Heart left ventricle (tissue), 16 donors: ENCODE measurements at regions of chr12 and their contacts with region 1.

Region 1: DNA sequence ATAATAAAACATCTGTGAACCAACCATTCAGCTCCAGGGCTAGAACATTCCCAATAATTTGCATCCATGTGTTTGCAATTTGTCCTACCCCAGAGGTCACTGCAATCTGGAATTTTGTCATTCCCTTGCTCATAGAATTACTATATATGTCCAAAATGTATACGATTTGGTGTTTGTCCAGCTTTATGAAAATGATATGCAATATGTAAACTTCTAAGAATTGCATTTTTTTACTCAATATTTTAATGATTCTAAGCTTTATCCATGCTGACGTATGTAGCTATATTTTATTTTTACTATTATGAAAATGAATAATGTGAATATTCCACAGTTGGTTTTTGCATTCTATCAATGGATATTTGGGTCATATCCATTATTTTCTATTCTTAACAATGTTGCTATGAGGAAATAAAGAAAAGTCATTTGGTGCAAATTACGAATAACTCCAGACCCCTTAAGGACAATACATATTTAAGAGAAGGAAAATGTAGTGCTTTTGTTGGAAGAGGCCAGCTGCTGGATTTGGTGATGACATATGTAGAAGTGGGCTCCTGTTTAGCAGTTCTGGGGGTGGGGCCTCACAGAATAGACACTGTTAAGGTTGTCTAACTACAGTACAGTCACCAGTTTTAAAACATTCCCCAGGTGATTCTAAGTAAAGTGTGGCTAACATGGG is 139.4 kb downstream of the SLC38A4 start:
- DNase-seq: no peak
- ATAC-seq: no peak
- H3K4me3 ChIP-seq: no peak overlapping the region
- H3K27ac ChIP-seq: no peak overlapping the region
- H3K4me1 ChIP-seq: no peaks in the 10 kb centered on the region
- H3K27me3 ChIP-seq: no peaks in the 10 kb centered on the region
- CTCF ChIP-seq: no peak
- POLR2A ChIP-seq: no peak

Region 2: DNA sequence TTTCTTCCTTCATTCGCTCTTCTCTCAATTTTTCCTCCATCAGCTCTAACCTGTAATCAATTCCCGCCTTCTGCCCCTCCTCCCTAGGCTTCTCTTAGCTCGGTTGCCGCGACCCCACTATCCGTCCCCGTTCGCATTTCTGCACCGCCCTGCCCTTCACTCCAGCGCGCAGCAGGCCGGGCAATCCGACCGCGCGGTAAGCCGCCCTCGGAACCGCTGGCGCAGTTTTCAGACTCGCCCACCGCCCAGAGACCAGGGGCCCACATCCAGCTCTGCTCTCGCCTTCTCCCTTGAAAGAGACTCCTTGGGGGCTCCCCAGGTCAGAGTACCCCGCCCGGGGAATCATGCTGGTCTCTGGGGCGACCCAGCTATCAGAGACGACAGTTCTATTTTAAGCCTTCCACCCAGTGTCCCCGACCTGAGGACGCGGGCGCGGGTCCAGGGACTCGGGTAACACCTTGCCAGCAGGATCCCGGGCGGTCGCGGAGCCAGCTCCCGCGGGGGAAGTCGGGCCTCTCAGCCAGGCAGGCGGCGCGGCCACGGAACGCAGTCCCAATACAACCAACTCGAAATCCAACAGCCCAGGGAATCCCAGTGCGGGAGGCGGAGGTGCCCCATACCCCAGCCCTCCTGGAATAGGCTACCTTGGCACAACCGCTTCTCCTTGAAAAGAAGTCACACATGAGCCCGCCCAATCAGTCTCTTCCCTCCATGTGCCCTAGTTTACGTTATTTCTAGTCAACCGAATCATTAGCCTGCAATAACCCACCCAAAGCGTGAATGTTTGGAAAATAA is 145.1 kb after region 1 on chr12:
- intact Hi-C with region 1: loop called in 1 of 10 experiments (anchors 10 kb)
- DNase-seq: peak; percentile 25 to 85 (median 82)
- ATAC-seq: peak; percentile 92 to 97 (median 93)
- H3K4me3 ChIP-seq: peak overlapping the region; percentile 37 to 58 (median 50)
- H3K27ac ChIP-seq: peak overlapping the region in 4 of 12 donors; percentile 50 to 79 (median 64)
- H3K4me1 ChIP-seq: peaks cover 0 to 15% (median 0%) of the 10 kb centered on the region in 12 donors
- H3K27me3 ChIP-seq: peaks cover 0 to 65% (median 9%) of the 10 kb centered on the region in 9 donors
- CTCF ChIP-seq: no peak
- POLR2A ChIP-seq: no peak

Region 3: GRCh38 chr12:46983393-46984266 is 297.2 kb after region 1 on chr12:
- intact Hi-C with region 1: loop called in 1 of 10 experiments (anchors 5 kb)
- DNase-seq: no peak
- ATAC-seq: peak in 3 of 4 donors; percentile 68 to 75 (median 70)
- H3K4me3 ChIP-seq: no peak overlapping the region
- H3K27ac ChIP-seq: no peak overlapping the region
- H3K4me1 ChIP-seq: peaks cover 0 to 3% (median 0%) of the 10 kb centered on the region in 12 donors
- H3K27me3 ChIP-seq: no peaks in the 10 kb centered on the region
- CTCF ChIP-seq: peak; percentile 49 to 78 (median 66)
- POLR2A ChIP-seq: no peak

Region 4: GRCh38 chr12:47014474-47014873 is 328.1 kb after region 1 on chr12:
- intact Hi-C with region 1: loop called in 1 of 10 experiments (anchors 10 kb)
- DNase-seq: no peak
- ATAC-seq: no peak
- H3K4me3 ChIP-seq: no peak overlapping the region
- H3K27ac ChIP-seq: no peak overlapping the region
- H3K4me1 ChIP-seq: no peaks in the 10 kb centered on the region
- H3K27me3 ChIP-seq: peaks cover 0 to 10% (median 0%) of the 10 kb centered on the region in 9 donors
- CTCF ChIP-seq: no peak
- POLR2A ChIP-seq: no peak